ENCODE measurements at regions of chr19 and their contacts with region 1.

Region 1: GRCh38 chr19:3324321-3324856 is 42.0 kb upstream of the NFIC start:
- DNase-seq: peak in 1 of 2 donors; percentile 94
- H3K4me3 ChIP-seq: no peak overlapping the region
- CTCF ChIP-seq: peak in 1 of 3 donors; percentile 75
- POLR2A ChIP-seq: no peak

Region 2: DNA sequence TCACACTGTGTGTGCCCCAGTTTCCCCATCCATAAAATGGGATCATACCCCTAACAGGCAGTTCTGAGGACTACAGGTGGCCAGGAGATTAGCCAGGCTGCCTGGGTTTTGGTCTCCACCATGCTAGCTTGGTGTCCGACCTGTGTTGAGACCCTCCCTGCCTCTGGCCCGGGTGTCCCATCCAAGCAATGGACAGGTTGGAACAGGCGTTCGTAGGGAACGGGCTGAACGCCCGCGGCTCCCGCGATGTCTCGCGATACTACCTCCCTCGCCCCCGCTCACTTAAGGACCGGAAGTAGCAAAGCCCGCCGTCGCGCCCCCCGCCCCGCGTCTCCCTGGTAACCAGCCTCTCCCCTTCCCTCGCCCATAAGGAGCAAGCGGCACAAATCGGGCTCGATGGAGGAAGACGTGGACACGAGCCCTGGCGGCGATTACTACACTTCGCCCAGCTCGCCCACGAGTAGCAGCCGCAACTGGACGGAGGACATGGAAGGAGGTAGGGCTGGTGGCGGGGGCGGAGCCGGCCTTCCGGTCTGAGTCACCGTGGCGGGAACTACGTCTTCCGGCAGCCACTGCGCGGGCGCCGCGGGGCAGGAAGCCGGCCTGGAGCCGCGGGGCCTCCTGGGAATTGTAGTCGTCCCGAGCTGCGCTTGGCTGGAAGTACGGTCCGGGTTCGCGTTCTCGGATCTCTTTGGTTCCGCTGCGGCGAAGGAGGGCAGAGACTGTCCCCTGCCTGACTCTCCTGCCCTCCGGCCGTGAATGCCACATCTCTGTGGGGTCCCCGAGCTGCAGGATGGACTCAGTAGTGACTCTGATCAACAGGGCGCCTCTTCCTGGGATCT is 110.5 kb after region 1 on chr19:
- intact Hi-C with region 1: loop called (anchors 5 kb)
- DNase-seq: peak; percentile 94 to 99
- H3K4me3 ChIP-seq: no peak overlapping the region
- CTCF ChIP-seq: no peak
- POLR2A ChIP-seq: no peak

Region 3: GRCh38 chr19:3471954-3472655 is 147.7 kb after region 1 on chr19:
- intact Hi-C with region 1: loop called (anchors 2 kb)
- DNase-seq: no peak
- H3K4me3 ChIP-seq: no peak overlapping the region
- CTCF ChIP-seq: peak in 1 of 3 donors; percentile 50
- POLR2A ChIP-seq: no peak

Region 4: DNA sequence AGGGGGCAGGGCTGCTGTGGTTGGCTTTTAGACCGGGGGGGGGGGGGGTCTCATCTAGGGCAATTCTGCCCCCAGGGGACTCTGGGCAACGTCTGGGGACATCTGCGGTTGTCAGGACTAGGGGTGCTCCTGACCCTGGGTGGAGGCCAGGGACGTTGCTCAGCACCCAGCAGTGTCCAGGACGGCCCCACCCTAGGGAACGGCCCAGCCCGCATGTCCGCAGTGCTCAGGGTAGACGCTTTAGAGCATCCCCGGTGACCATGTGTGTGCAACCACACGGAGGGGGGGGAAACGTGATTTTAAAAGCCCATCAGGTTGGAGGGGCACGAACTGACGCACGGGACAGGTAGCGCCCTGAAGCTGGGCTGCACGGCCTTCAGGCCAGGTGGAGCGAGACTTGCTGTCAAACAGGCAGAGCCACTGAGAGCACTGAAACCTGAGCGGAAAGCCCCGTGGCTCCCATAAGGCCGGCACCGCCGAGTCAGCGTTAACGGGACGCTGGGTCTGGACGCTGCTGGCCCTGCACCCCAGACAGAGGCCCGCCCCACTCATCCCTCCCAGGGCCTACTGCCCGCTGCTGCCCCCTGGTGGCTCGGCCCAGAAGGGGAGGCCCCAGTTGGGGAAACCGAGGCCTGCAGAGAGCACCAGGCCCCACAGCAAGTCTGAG is 293.9 kb after region 1 on chr19:
- intact Hi-C with region 1: loop called (anchors 10 kb)
- DNase-seq: no peak
- H3K4me3 ChIP-seq: no peak overlapping the region
- CTCF ChIP-seq: peak in 1 of 3 donors; percentile 84
- POLR2A ChIP-seq: no peak

Region 5: DNA sequence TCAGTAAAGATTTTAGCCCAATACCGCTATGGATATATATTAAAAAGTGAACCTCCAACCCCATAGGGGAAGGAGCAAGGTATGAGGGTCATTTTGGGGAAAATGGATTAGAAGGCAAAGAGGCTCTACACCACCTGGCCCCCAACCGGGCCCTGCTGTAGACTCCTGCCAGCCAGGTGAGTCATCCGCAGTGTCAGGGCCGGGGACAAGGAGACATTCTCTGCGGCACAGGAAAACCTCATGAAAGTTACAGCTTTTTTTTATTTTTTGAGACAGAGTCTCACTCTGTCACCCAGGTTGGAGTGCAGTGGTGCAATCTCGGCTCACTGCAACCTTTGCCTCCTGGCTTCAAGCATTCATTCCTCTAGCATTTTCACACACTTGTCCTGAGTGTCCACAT is 512.5 kb after region 1 on chr19:
- intact Hi-C with region 1: no loop called
- DNase-seq: no peak
- H3K4me3 ChIP-seq: no peak overlapping the region
- CTCF ChIP-seq: no peak
- POLR2A ChIP-seq: no peak